Heart left ventricle (tissue), 16 donors: ENCODE measurements at regions of chr19 and their contacts with region 1.

Region 1: DNA sequence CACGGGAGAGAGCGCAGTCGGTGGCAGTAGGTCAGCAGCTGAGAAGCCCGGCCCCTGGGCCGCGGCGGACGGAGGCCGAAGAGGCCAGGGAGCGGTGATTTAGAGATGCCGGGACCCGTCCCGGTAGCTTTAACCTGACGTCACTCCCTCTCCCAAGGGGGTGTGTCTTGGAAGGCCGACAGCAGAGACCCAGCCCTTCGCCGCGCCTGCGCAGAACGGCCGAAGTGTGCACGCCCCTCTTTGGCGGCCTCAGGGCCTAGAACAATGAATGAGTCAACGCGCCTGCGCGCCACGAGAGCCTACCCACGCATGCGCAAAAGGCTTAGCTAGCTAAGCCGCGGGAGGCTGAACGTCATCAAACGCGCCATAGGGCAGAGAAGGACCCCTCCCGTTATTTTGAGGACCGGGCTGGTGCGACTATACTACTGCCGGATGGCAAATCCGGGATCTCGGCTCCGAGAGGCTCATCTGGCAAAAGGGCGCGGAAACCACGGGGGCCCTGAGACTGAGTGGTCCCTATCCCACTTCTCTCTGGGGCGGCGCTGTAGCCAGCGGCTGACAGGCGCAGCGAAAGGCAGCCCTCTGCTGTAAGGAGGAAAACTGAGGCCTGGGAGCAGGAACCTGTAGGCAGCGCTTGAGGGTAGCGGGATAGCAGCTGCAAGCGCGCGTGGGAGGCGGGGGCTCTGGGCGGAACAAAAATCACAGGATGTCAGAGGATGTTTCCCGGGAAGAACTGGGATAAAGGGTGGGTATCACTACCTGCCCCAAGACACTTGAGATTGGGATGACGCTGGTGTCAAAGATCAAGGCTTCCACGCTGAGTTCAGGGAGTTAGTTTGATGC is at the starts of genes IRGQ and ZNF576:
- DNase-seq: peak; percentile 100
- ATAC-seq: peak; percentile 93 to 96 (median 95)
- H3K4me3 ChIP-seq: peak within 1 kb of the TSS; percentile 47 to 90 (median 75)
- H3K27ac ChIP-seq: peak within 1 kb of the TSS; percentile 93 to 100 (median 96)
- H3K4me1 ChIP-seq: peaks cover 8 to 41% (median 32%) of the 10 kb centered on the region in 12 donors
- H3K27me3 ChIP-seq: no peaks in the 10 kb centered on the region
- CTCF ChIP-seq: no peak
- POLR2A ChIP-seq: peak in 1 of 2 donors; percentile 75
- total RNA-seq, gene IRGQ: 21.1 to 36.1 (median 24.9) TPM
- total RNA-seq, gene ZNF576: 9.0 to 17.6 (median 11.8) TPM

Region 2: DNA sequence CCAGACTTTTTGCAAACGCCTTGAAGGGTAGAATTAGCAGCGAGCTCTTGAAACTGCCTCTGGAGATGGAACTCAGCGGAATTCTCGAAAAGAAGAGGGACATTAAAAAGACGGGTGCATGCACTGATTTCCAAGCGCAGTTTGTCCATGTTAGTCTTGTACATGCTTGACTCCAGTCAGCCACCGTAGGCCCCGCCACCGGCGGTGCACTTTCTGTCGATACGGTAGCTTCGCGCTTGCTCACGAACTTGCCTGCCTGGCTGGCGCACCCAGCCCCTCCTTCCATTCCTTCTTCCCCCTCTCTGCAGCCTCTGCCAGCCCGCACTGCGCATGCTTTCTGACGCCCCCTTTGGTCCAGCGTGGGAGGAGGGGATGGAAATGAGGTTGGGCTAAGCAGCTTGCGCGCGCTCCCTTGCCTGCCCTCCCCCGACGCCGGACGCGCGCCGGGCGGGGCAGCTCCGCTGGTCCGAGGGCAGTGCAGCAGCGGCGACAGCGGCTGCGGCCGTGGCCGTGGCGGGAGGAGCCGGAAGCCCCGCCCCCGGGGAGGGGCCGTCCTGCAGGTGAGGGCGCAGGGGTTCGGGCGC is 63.2 kb before region 1 on chr19 and contains the start of gene ZNF575:
- intact Hi-C with region 1: loop called in 5 of 10 experiments (anchors 1 to 10 kb)
- DNase-seq: peak; percentile 92 to 94 (median 94)
- ATAC-seq: peak; percentile 57 to 81 (median 74)
- H3K4me3 ChIP-seq: peak within 1 kb of the TSS; percentile 35 to 72 (median 60)
- H3K27ac ChIP-seq: peak within 1 kb of the TSS; percentile 58 to 95 (median 88)
- H3K4me1 ChIP-seq: peaks cover 0 to 26% (median 12%) of the 10 kb centered on the region in 12 donors
- H3K27me3 ChIP-seq: no peaks in the 10 kb centered on the region
- CTCF ChIP-seq: peak in 1 of 12 donors; percentile 12
- POLR2A ChIP-seq: no peak
- total RNA-seq, gene ZNF575: 0.58 to 1.9 (median 1.3) TPM in 7 of 9 donors, not detected in the others

Region 3: DNA sequence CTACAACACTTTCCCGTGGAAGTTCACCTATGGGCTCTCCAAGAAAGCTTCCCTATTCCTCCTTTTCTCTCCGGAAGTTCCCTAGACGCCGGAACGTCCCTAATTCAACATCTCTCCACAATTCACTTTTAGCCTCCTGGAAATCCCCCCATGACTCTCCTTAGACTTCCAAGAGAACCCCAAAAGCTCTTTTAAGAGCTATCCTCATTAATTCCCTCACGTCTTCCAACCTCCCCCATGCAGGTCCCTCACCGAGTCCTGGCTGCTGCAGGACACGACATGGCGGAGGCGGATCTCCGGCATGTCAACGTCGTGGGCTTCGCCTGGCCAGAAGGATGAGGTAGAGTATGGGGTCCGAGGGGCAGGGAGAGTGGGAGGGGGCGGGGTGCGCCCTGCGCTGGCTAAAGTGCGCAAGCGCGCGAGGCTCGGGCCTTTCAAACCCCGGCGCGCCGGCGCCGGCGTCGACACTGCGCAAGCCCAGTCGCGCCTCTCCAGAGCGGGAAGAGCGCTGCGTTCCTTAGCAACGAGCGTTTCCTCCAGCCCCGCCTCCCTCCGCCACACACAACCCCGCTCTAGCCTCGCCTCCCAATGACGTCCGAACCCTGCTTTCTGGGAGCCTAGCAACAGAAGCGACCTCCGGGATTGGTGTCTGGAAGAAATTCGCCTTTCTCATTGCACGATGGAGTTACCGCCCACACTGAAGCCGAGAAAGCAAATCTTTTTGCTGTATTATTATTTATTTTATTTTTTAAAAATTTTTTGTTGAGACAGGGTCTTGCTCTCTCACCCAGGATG is 20.9 kb before region 1 on chr19 and contains the starts of genes PINLYP and XRCC1:
- intact Hi-C with region 1: loop called in 8 of 10 experiments (anchors 1 to 2 kb)
- DNase-seq: peak; percentile 98 to 99 (median 99)
- ATAC-seq: peak; percentile 99 to 100 (median 100)
- H3K4me3 ChIP-seq: peak within 1 kb of the TSS; percentile 57 to 96 (median 87)
- H3K27ac ChIP-seq: peak within 1 kb of the TSS in 11 of 12 donors; percentile 49 to 93 (median 83)
- H3K4me1 ChIP-seq: peaks cover 6 to 24% (median 13%) of the 10 kb centered on the region in 12 donors
- H3K27me3 ChIP-seq: no peaks in the 10 kb centered on the region
- CTCF ChIP-seq: no peak
- POLR2A ChIP-seq: peak in 1 of 2 donors; percentile 57
- total RNA-seq, gene PINLYP: 0.76 to 4.3 (median 1.1) TPM in 8 of 9 donors, not detected in the other
- total RNA-seq, gene XRCC1: 11.2 to 21.3 (median 16.6) TPM

Region 4: GRCh38 chr19:43581467-43581866 is 14.8 kb before region 1 on chr19:
- intact Hi-C with region 1: loop called in 2 of 10 experiments (anchors 2 kb)
- DNase-seq: no peak
- ATAC-seq: no peak
- H3K4me3 ChIP-seq: peak overlapping the region in 8 of 12 donors; percentile 48 to 66 (median 58)
- H3K27ac ChIP-seq: peak overlapping the region in 4 of 12 donors; percentile 3 to 67 (median 66)
- H3K4me1 ChIP-seq: peaks cover 0 to 30% (median 5%) of the 10 kb centered on the region in 12 donors
- H3K27me3 ChIP-seq: no peaks in the 10 kb centered on the region
- CTCF ChIP-seq: no peak
- POLR2A ChIP-seq: no peak

Region 5: GRCh38 chr19:43619262-43620060 is 23.2 kb after region 1 on chr19 and contains the start of gene ZNF428:
- intact Hi-C with region 1: loop called in 1 of 10 experiments (anchors 1 kb)
- DNase-seq: peak; percentile 86 to 94 (median 91)
- ATAC-seq: peak; percentile 86 to 96 (median 94)
- H3K4me3 ChIP-seq: peak within 1 kb of the TSS; percentile 48 to 98 (median 76)
- H3K27ac ChIP-seq: peak within 1 kb of the TSS; percentile 87 to 99 (median 96)
- H3K4me1 ChIP-seq: peaks cover 0 to 23% (median 13%) of the 10 kb centered on the region in 12 donors
- H3K27me3 ChIP-seq: no peaks in the 10 kb centered on the region
- CTCF ChIP-seq: peak in 2 of 12 donors; percentile 9
- POLR2A ChIP-seq: peak in 1 of 2 donors; percentile 77
- total RNA-seq, gene ZNF428: 25.1 to 40.4 (median 31.3) TPM

Region 6: DNA sequence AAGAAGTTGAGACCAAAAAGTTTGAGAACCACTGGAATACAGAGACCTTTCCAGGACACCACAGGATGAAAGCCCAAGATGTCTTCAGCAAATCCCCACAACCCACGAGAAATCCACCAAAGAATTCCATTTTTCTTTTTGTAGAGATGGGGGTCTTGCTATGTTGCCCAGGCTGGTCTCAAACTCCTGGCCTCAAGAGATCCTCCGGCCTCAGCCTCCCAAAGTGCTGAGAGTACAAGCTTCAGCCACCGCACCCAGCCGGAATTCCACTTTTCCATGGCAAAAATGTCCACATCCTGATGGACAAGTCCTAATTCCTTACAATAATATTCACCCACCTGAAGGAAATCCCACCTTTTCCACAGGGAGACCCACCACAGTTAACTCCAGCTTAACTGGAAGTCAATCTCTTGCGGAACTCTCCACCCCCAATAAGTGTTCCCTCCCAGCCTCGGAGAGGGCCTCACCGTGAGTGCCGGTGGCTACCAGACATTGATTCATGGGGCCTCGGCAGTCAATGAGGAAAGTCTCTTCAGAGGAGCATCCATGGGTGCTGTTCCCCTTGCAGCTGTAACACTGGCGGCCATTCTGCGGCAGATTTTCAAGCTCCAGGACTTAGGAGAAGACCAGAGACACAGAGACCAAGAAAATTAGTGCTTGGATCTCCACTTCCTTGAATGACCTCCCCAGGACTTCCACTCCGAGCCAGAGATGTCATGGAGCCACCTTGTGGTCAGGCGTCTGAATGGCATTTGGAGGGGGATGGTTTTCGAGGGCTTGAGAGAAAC is 55.7 kb after region 1 on chr19:
- intact Hi-C with region 1: loop called in 1 of 10 experiments (anchors 10 kb)
- DNase-seq: peak in 4 of 5 donors; percentile 44 to 62 (median 47)
- ATAC-seq: peak in 3 of 4 donors; percentile 67 to 82 (median 80)
- H3K4me3 ChIP-seq: peak overlapping the region in 1 of 12 donors; percentile 25
- H3K27ac ChIP-seq: no peak overlapping the region
- H3K4me1 ChIP-seq: peaks cover 0 to 4% (median 0%) of the 10 kb centered on the region in 12 donors
- H3K27me3 ChIP-seq: no peaks in the 10 kb centered on the region
- CTCF ChIP-seq: peak; percentile 59 to 81 (median 76)
- POLR2A ChIP-seq: no peak